CD14-positive monocyte (primary cell): ENCODE measurements at regions of chr7 and their contacts with region 1.

Region 1: DNA sequence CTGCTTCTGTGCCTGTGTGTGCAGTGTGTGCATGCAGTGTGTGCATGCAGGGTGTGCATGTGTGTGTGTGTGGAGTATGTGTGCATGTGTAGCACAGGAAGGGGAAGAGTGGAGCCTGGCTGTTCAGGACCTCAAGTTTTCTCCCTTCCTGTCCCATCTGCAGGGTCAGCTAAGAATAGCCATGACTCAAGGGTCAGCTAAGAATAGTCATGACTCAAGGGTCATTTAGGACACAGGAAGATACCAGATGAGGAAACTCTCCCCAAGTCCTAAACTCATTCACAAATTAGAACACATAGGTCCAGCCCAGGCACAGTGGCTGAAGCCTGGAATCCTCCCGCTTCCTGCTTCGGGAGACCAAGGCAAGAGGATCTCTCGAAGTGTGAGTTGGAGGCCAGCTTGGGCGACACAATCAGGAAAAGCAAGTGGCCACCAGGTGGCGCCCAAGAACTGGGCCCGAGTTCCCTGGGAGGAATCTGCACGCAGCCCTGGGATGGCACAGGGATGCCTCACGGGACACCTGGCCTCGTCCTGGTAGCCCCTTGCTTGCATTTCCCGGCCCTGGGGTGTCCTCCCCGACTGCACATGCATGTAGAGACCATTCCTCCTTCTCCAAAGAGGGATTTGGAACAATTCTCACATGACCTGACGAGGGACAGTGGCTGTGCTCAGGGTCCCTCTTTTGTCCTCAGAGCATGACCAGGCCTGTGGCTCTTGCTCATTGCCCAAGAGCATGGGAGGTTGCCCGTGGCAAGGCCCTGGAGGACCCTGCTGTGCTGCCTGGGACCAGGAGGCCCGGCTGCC is 21.4 kb upstream of the VOPP1 start:
- DNase-seq: peak; percentile 39 to 82 (median 60)
- H3K4me3 ChIP-seq: no peak overlapping the region
- H3K4me3 Mint-ChIP-seq: no peak overlapping the region
- H3K27ac ChIP-seq: no peak overlapping the region
- H3K27ac Mint-ChIP-seq: no peak overlapping the region
- H3K4me1 ChIP-seq: no peaks in the 10 kb centered on the region
- H3K4me1 Mint-ChIP-seq: peaks cover 8% of the 10 kb centered on the region
- H3K27me3 ChIP-seq: no peaks in the 10 kb centered on the region
- H3K27me3 Mint-ChIP-seq: peaks cover 4 to 15% (median 8%) of the 10 kb centered on the region in 3 donors
- CTCF ChIP-seq: peak; percentile 84

Region 2: GRCh38 chr7:55546829-55547228 is 46.9 kb before region 1 on chr7:
- intact Hi-C with region 1: no loop called
- DNase-seq: peak; percentile 76 to 84 (median 76)
- H3K4me3 ChIP-seq: no peak overlapping the region
- H3K4me3 Mint-ChIP-seq: no peak overlapping the region
- H3K27ac ChIP-seq: no peak overlapping the region
- H3K27ac Mint-ChIP-seq: peak overlapping the region in 4 of 7 donors; percentile 46 to 75 (median 48)
- H3K4me1 ChIP-seq: peaks cover 7 to 9% of the 10 kb centered on the region in 2 donors
- H3K4me1 Mint-ChIP-seq: peaks cover 37% of the 10 kb centered on the region
- H3K27me3 ChIP-seq: no peaks in the 10 kb centered on the region
- H3K27me3 Mint-ChIP-seq: peaks cover 0 to 2% (median 0%) of the 10 kb centered on the region in 3 donors
- CTCF ChIP-seq: no peak

Region 3: GRCh38 chr7:55629051-55629677 is 35.4 kb after region 1 on chr7:
- intact Hi-C with region 1: no loop called
- DNase-seq: no peak
- H3K4me3 ChIP-seq: no peak overlapping the region
- H3K4me3 Mint-ChIP-seq: no peak overlapping the region
- H3K27ac ChIP-seq: no peak overlapping the region
- H3K27ac Mint-ChIP-seq: no peak overlapping the region
- H3K4me1 ChIP-seq: no peaks in the 10 kb centered on the region
- H3K4me1 Mint-ChIP-seq: no peaks in the 10 kb centered on the region
- H3K27me3 ChIP-seq: no peaks in the 10 kb centered on the region
- H3K27me3 Mint-ChIP-seq: peaks cover 2% of the 10 kb centered on the region in 3 donors
- CTCF ChIP-seq: no peak

Region 4: GRCh38 chr7:55964261-55965099 is 370.8 kb after region 1 on chr7 and contains the start of gene NIPSNAP2:
- intact Hi-C with region 1: loop called in 1 of 2 experiments (anchors 10 kb)
- DNase-seq: peak; percentile 58 to 78 (median 77)
- H3K4me3 ChIP-seq: peak within 1 kb of the TSS; percentile 64 to 79 (median 66)
- H3K4me3 Mint-ChIP-seq: peak within 1 kb of the TSS; percentile 88 to 94
- H3K27ac ChIP-seq: peak within 1 kb of the TSS; percentile 88 to 92
- H3K27ac Mint-ChIP-seq: peak within 1 kb of the TSS; percentile 90 to 97 (median 96)
- H3K4me1 ChIP-seq: peaks cover 18% of the 10 kb centered on the region in 2 donors
- H3K4me1 Mint-ChIP-seq: peaks cover 23% of the 10 kb centered on the region
- H3K27me3 ChIP-seq: peaks cover 0 to 5% of the 10 kb centered on the region in 2 donors
- H3K27me3 Mint-ChIP-seq: peaks cover 0 to 9% (median 7%) of the 10 kb centered on the region in 3 donors
- CTCF ChIP-seq: peak; percentile 56
- polyA plus RNA-seq, gene NIPSNAP2: 43.2 to 97.5 (median 88.0) TPM